SK-N-SH (cell line): ENCODE measurements at regions of chr12 and their contacts with region 1.

Region 1: GRCh38 chr12:92784795-92785562 is 82.2 kb downstream of the PLEKHG7 start:
- DNase-seq: peak; percentile 38
- H3K4me3 ChIP-seq: no peak overlapping the region; a peak in 1 of 4 replicates
- H3K27ac ChIP-seq: peak overlapping the region; percentile 24 to 69; a peak in 3 of 4 replicates
- H3K4me1 ChIP-seq: peaks cover 2 to 5% of the 10 kb centered on the region in 2 experiments; a peak in 2 of 4 replicates
- H3K27me3 ChIP-seq: no peaks in the 10 kb centered on the region
- CTCF ChIP-seq: peak; percentile 60
- EP300 ChIP-seq: no peak
- RAD21 ChIP-seq: peak; percentile 81

Region 2: DNA sequence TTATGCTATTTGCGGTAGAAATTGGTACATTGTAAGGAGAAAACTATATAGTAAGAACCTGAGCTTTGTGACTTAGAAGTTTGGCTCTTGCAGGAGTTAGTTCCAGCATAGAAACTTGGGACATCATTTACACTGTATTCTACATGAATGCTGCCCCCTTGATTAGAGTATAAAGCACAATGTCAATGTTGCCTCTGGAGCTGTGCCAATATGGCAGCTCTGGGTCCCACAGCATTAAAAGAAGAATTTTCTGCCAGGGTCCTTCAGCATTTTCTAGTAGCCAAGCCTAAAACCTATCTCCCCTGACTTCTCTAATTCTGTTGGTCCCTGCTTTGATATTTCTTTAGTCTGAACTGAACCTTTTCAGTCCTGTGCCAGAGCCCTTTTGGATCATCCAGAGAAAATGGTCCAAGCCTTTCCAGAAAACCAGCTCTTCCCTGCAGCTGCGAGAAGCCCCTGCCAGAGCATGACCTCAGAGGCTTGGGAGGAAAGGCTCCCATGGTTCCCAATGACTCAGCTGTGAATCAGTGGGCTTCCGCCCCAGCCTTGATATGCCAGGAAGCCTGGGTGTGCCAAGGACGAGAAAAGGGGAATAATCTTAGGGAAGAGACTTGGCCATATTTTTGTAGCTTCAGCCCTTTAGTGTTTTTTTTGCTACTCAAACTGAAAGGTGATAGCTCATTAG is 39.0 kb before region 1 on chr12:
- CTCF ChIA-PET with region 1: no interaction called
- POLR2A ChIA-PET with region 1: no interaction called
- DNase-seq: peak; percentile 10
- H3K4me3 ChIP-seq: no peak overlapping the region
- H3K27ac ChIP-seq: peak overlapping the region; percentile 4 to 98; a peak in 3 of 4 replicates
- H3K4me1 ChIP-seq: peaks cover 0 to 16% of the 10 kb centered on the region in 2 experiments
- H3K27me3 ChIP-seq: no peaks in the 10 kb centered on the region
- CTCF ChIP-seq: no peak; the same call in 1 of the 2 replicates
- EP300 ChIP-seq: peak in 1 of 2 experiments; percentile 83; a peak in 2 of 4 replicates
- RAD21 ChIP-seq: no peak

Region 3: DNA sequence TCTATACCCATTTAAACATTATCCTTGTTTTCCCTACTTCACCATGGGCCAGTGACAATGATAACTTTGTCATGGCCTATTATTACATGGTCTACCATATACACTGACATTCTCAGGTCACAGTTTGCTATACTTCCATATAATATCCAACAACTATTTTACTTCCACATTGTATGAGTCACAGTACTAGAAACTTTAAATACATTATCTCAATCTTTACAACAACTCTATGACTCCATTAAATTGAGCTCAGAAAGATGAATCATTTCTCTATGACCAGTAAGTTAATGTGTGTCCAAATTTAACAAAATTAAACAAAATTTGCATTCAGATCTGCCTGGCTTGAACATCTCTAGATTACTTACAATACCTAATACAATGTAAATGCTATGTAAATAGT is 11.7 kb after region 1 on chr12:
- CTCF ChIA-PET with region 1: interaction called, 12 read pairs
- POLR2A ChIA-PET with region 1: no interaction called
- DNase-seq: no peak
- H3K4me3 ChIP-seq: no peak overlapping the region
- H3K27ac ChIP-seq: peak overlapping the region in 1 of 2 experiments; percentile 16; a peak in 1 of 4 replicates
- H3K4me1 ChIP-seq: peaks cover 0 to 5% of the 10 kb centered on the region in 2 experiments; a peak in 1 of 4 replicates
- H3K27me3 ChIP-seq: no peaks in the 10 kb centered on the region
- CTCF ChIP-seq: no peak
- EP300 ChIP-seq: no peak
- RAD21 ChIP-seq: no peak